ENCODE measurements at regions of chr9 and their contacts with region 1.

Region 1: GRCh38 chr9:89701221-89701798 is 96.5 kb downstream of the GADD45G start:
- DNase-seq: peak; percentile 23 to 83 (median 50)
- ATAC-seq: peak; percentile 96
- H3K4me3 ChIP-seq: no peak overlapping the region
- H3K4me3 Mint-ChIP-seq: peak overlapping the region; percentile 53 to 89 (median 68)
- H3K27ac ChIP-seq: no peak overlapping the region
- H3K27ac Mint-ChIP-seq: peak overlapping the region; percentile 61 to 91 (median 65)
- H3K4me1 ChIP-seq: peaks cover 0 to 14% of the 10 kb centered on the region in 2 donors
- H3K4me1 Mint-ChIP-seq: peaks cover 1 to 85% (median 27%) of the 10 kb centered on the region in 7 donors
- H3K27me3 ChIP-seq: no peaks in the 10 kb centered on the region
- H3K27me3 Mint-ChIP-seq: no peaks in the 10 kb centered on the region

Region 2: GRCh38 chr9:89388084-89388867 is 313.0 kb before region 1 on chr9:
- CTCF ChIA-PET with region 1: no interaction called
- POLR2A ChIA-PET with region 1: no interaction called
- intact Hi-C with region 1: no loop called
- DNase-seq: no peak
- ATAC-seq: peak; percentile 78
- H3K4me3 ChIP-seq: no peak overlapping the region
- H3K4me3 Mint-ChIP-seq: no peak overlapping the region
- H3K27ac ChIP-seq: no peak overlapping the region
- H3K27ac Mint-ChIP-seq: peak overlapping the region in 5 of 9 donors; percentile 8 to 43 (median 17)
- H3K4me1 ChIP-seq: no peaks in the 10 kb centered on the region
- H3K4me1 Mint-ChIP-seq: peaks cover 9 to 43% (median 16%) of the 10 kb centered on the region in 7 donors
- H3K27me3 ChIP-seq: no peaks in the 10 kb centered on the region
- H3K27me3 Mint-ChIP-seq: no peaks in the 10 kb centered on the region

Region 3: DNA sequence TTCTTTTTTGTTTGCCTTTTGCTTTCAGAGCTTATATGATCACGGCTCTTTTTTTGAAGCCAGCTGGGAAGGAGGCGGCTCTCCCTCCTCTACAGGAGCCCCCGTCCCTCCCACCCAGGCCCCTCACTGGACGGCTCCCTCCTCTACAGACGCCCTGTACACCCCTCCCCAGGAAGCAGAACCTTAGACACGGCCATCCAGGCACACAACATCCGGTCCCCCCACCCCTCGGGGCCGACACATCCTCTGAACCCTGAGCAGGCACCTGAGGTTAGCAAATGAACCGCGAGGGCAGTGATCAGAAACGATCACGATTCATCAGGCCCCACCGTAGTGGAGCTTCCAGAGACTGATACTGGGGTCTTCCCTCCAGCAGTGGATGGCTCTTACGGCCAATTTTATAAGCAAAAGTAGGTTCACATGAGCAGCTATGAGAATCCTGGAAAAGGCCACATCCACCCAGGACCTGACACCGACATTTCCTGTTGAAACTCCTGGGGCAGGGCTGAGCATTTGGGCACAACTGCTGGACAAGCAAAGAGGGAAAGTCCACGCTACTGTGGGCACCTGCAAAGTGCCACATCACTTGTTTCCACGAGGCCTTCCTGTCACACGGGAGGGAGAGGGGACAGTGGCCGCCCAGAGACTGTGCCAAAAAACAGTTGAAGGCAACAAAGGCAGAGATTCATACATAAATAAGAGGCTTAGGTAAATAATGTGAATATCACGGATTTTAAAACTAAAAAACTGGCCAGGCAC is 282.2 kb before region 1 on chr9:
- CTCF ChIA-PET with region 1: no interaction called
- POLR2A ChIA-PET with region 1: no interaction called
- intact Hi-C with region 1: loop called in 1 of 2 experiments (anchors 5 kb)
- DNase-seq: peak in 8 of 9 donors; percentile 55 to 71 (median 68)
- ATAC-seq: peak; percentile 80
- H3K4me3 ChIP-seq: peak overlapping the region; percentile 52
- H3K4me3 Mint-ChIP-seq: peak overlapping the region; percentile 73 to 87 (median 78)
- H3K27ac ChIP-seq: peak overlapping the region; percentile 66
- H3K27ac Mint-ChIP-seq: peak overlapping the region; percentile 85 to 97 (median 94)
- H3K4me1 ChIP-seq: peaks cover 57 to 77% of the 10 kb centered on the region in 2 donors
- H3K4me1 Mint-ChIP-seq: peaks cover 65 to 96% (median 92%) of the 10 kb centered on the region in 7 donors
- H3K27me3 ChIP-seq: no peaks in the 10 kb centered on the region
- H3K27me3 Mint-ChIP-seq: no peaks in the 10 kb centered on the region

Region 4: GRCh38 chr9:89612566-89613268 is 88.6 kb before region 1 on chr9:
- CTCF ChIA-PET with region 1: no interaction called
- POLR2A ChIA-PET with region 1: no interaction called
- intact Hi-C with region 1: no loop called
- DNase-seq: no peak
- ATAC-seq: no peak
- H3K4me3 ChIP-seq: no peak overlapping the region
- H3K4me3 Mint-ChIP-seq: no peak overlapping the region
- H3K27ac ChIP-seq: no peak overlapping the region
- H3K27ac Mint-ChIP-seq: peak overlapping the region in 1 of 9 donors; percentile 12
- H3K4me1 ChIP-seq: no peaks in the 10 kb centered on the region
- H3K4me1 Mint-ChIP-seq: peaks cover 0 to 17% (median 0%) of the 10 kb centered on the region in 7 donors
- H3K27me3 ChIP-seq: no peaks in the 10 kb centered on the region
- H3K27me3 Mint-ChIP-seq: peaks cover 0 to 29% (median 0%) of the 10 kb centered on the region in 5 donors

Region 5: DNA sequence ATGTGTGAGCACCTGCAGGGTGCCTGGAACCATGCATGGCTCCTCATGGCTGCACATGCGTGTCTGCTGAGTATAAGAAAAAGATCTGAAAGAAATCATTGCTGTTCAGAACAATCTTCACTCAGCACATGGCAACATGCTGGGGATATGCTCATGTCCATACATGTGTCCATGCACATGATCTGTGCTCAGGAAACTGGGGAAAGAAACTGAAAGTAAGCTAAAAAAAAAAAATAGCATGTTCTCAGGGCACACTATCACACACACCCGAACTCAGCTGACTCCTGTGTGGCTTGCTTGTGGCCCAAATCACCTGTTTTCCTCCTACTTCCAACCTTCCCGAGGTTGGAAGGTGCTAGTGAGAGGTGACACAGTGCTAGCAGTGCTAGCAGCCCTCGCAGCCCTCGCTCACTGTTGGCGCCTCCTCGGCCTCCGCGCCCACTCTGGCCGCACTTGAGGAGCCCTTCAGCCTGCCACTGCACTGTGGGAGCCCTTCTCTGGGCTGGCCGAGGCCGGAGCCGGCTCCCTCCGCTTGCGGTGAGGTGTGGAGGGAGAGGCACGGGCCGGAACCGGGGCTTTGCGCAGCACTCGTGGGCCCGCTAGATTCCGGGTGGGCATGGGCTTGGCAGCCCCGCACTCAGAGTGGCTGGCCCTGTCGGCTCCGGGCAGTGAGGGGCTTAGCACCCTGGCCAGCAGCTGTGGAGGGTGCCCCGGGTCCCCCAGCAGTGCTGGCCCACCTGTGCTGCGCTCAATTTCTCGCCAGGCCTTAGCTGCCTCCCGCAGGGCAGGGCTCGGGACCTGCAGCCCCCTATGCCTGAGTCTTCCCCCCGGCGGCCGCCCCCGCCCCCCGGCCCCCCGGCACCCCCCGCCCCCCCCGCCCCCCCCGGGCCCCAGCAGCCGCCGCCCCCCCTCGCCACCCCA is 20.5 kb before region 1 on chr9:
- CTCF ChIA-PET with region 1: no interaction called
- POLR2A ChIA-PET with region 1: interaction called, 3 read pairs
- intact Hi-C with region 1: loop called in 1 of 2 experiments (anchors 1 kb)
- DNase-seq: no peak
- ATAC-seq: no peak
- H3K4me3 ChIP-seq: no peak overlapping the region
- H3K4me3 Mint-ChIP-seq: peak overlapping the region in 1 of 10 donors; percentile 28
- H3K27ac ChIP-seq: no peak overlapping the region
- H3K27ac Mint-ChIP-seq: peak overlapping the region in 1 of 9 donors; percentile 62
- H3K4me1 ChIP-seq: no peaks in the 10 kb centered on the region
- H3K4me1 Mint-ChIP-seq: peaks cover 0 to 24% (median 0%) of the 10 kb centered on the region in 7 donors
- H3K27me3 ChIP-seq: no peaks in the 10 kb centered on the region
- H3K27me3 Mint-ChIP-seq: no peaks in the 10 kb centered on the region

Region 6: GRCh38 chr9:89714321-89714720 is 13.0 kb after region 1 on chr9:
- CTCF ChIA-PET with region 1: interaction called, 3 read pairs
- POLR2A ChIA-PET with region 1: no interaction called
- intact Hi-C with region 1: loop called in 1 of 2 experiments (anchors 1 kb)
- DNase-seq: no peak
- ATAC-seq: no peak
- H3K4me3 ChIP-seq: no peak overlapping the region
- H3K4me3 Mint-ChIP-seq: peak overlapping the region in 1 of 10 donors; percentile 53
- H3K27ac ChIP-seq: no peak overlapping the region
- H3K27ac Mint-ChIP-seq: peak overlapping the region in 1 of 9 donors; percentile 81
- H3K4me1 ChIP-seq: peaks cover 0 to 9% of the 10 kb centered on the region in 2 donors
- H3K4me1 Mint-ChIP-seq: peaks cover 2 to 70% (median 14%) of the 10 kb centered on the region in 7 donors
- H3K27me3 ChIP-seq: no peaks in the 10 kb centered on the region
- H3K27me3 Mint-ChIP-seq: no peaks in the 10 kb centered on the region

Region 7: DNA sequence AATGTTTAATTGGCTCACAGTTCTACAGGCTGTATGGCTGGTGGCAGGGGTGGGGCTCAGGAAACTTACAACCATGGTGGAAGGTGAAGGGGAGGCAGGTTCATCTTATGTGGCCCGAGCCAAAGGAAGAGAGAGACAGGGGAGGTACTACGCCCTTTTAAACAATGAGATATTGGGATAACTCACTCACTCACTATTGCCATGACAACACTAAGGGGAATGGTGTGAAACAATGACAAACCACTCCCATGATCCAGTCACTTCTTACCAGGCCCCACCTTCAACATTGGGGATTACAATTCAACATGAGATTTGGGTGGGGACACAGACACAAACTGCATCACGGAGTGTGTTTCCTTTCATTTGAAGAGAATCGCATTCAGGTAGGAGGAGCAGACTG is 124.4 kb after region 1 on chr9:
- CTCF ChIA-PET with region 1: no interaction called
- POLR2A ChIA-PET with region 1: no interaction called
- intact Hi-C with region 1: loop called in 1 of 2 experiments (anchors 5 kb)
- DNase-seq: no peak
- ATAC-seq: no peak
- H3K4me3 ChIP-seq: no peak overlapping the region
- H3K4me3 Mint-ChIP-seq: no peak overlapping the region
- H3K27ac ChIP-seq: no peak overlapping the region
- H3K27ac Mint-ChIP-seq: no peak overlapping the region
- H3K4me1 ChIP-seq: no peaks in the 10 kb centered on the region
- H3K4me1 Mint-ChIP-seq: peaks cover 12 to 26% (median 18%) of the 10 kb centered on the region in 7 donors
- H3K27me3 ChIP-seq: no peaks in the 10 kb centered on the region
- H3K27me3 Mint-ChIP-seq: peaks cover 0 to 8% (median 0%) of the 10 kb centered on the region in 5 donors

Region 8: GRCh38 chr9:90095682-90096081 is 394.4 kb after region 1 on chr9:
- CTCF ChIA-PET with region 1: no interaction called
- POLR2A ChIA-PET with region 1: no interaction called
- intact Hi-C with region 1: loop called in 1 of 2 experiments (anchors 1 kb)
- DNase-seq: no peak
- ATAC-seq: no peak
- H3K4me3 ChIP-seq: no peak overlapping the region
- H3K4me3 Mint-ChIP-seq: peak overlapping the region in 1 of 10 donors; percentile 3
- H3K27ac ChIP-seq: no peak overlapping the region
- H3K27ac Mint-ChIP-seq: no peak overlapping the region
- H3K4me1 ChIP-seq: peaks cover 6 to 19% of the 10 kb centered on the region in 2 donors
- H3K4me1 Mint-ChIP-seq: peaks cover 13 to 28% (median 24%) of the 10 kb centered on the region in 7 donors
- H3K27me3 ChIP-seq: no peaks in the 10 kb centered on the region
- H3K27me3 Mint-ChIP-seq: peaks cover 0 to 35% (median 5%) of the 10 kb centered on the region in 5 donors